ENCODE measurements at regions of chr6 and their contacts with region 1.

Region 1: DNA sequence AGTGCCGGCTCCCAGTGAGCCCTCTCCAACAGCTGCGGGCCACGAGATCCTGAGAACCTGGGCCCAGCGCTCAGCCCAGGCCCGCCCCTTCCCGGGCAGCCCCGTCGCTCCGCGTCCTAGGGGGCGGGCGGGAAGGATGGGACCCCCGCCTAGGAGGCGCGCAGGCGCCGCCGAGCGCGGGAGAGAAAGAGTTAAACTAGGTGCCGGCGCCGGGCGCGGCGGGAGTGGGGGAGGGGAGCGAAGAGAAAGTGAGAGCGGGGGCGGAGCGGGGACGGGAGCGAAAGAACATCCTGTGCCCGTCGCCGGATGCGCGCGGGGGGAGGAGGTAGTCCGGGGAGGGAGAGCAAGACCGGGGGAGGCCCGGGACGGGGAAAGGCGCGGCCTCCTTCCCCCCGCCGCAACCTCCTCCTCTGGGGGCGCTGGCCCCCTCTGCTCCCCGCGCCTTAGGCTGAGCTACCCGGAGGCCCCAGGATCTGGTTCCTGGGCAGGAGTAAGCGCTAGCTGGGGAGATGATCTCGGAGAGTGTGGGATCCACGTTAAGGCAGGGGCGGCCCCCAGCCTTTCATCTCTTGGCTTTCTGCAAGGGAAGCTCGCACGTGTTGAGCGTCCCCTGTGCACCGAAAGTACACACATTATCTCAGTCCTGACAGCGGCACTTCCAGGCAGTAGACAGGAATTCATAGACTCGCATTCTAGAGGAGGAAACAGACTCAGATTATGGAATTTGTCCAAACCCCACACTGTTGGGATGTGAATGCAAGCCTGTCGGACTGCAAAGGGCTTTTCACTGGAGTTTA is 4.9 kb upstream of the ARMC12 start:
- DNase-seq: peak; percentile 84 to 91 (median 90)
- H3K4me3 ChIP-seq: peak overlapping the region; percentile 61 to 81 (median 66)
- H3K27ac ChIP-seq: peak overlapping the region; percentile 72 to 83
- H3K4me1 ChIP-seq: peaks cover 29 to 85% (median 68%) of the 10 kb centered on the region in 4 experiments
- H3K27me3 ChIP-seq: no peaks in the 10 kb centered on the region

Region 2: DNA sequence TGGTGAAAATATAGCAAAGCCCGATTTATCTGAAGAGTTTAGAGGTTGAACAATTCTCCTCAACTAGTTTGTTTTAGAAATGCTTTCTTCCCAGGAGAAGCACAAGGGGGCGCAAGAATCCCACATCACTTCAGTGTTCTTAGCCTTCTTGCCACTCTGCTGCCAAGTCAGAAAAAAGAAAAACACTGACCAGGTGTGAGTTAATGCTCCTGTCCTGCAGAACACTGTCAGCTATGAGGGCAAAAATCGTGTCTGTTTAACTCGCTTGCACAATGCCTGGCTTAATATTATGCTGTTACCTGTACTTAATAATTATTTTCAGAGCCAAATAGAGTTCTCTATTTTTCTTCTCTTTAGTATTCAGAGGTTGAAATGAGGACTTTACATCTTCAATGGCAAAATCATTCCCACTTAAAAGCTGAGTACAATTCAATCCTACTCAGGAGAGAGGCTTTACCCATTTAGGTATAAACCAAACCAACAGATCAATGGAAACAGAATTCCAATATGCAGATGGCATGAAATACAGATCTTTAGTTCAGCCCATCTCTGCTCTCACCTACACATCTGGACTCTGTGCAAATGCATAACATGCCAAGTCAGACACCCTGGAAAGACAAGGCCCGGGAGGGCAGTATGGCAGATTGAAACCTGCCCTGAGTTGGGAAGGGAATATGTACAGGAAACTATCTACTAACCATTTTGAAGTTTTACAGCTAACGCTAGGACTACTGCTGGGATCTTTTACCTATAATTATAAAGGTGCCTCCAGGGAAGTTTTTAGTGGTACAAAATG is 147.8 kb before region 1 on chr6:
- CTCF ChIA-PET with region 1: interaction called, 102 read pairs
- POLR2A ChIA-PET with region 1: interaction called, 5 read pairs
- DNase-seq: peak; percentile 75 to 88 (median 84)
- H3K4me3 ChIP-seq: no peak overlapping the region
- H3K27ac ChIP-seq: no peak overlapping the region
- H3K4me1 ChIP-seq: peaks cover 0 to 3% (median 0%) of the 10 kb centered on the region in 4 experiments
- H3K27me3 ChIP-seq: no peaks in the 10 kb centered on the region

Region 3: GRCh38 chr6:35640017-35640664 is 91.8 kb before region 1 on chr6:
- CTCF ChIA-PET with region 1: interaction called, 65 read pairs
- POLR2A ChIA-PET with region 1: no interaction called
- DNase-seq: no peak
- H3K4me3 ChIP-seq: no peak overlapping the region
- H3K27ac ChIP-seq: no peak overlapping the region
- H3K4me1 ChIP-seq: no peaks in the 10 kb centered on the region
- H3K27me3 ChIP-seq: no peaks in the 10 kb centered on the region

Region 4: DNA sequence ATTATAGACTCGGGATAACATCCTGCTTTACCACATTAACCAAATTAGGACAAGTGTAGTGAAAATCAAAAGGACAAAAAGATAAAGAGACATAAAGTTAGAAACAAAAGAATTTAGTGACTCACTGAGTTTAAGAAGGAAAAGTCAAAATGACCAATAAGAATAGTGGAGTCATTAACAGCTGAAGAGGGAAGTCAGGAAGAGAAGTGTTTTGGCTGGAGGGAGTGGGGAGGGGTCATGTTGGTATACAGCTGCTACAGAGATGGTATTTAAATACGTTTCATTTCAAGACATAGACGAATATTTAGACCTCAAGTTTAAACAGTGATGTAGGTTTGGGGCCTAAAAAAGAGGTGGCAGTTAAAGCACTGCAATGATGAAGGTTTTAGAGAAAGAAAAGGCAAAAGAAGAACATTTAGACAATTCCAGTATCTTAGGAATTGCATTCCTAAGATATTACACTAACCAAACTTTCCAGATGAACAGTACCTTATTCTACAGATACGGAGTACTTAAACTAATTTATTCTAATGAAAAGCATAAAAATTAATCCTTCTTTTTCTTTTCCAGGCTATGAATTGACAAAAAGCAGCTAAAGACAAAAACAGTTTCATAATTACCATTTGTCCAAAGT is 53.8 kb before region 1 on chr6:
- CTCF ChIA-PET with region 1: interaction called, 73 read pairs
- POLR2A ChIA-PET with region 1: interaction called, 8 read pairs
- DNase-seq: no peak
- H3K4me3 ChIP-seq: no peak overlapping the region
- H3K27ac ChIP-seq: no peak overlapping the region
- H3K4me1 ChIP-seq: peaks cover 0 to 31% (median 10%) of the 10 kb centered on the region in 4 experiments
- H3K27me3 ChIP-seq: no peaks in the 10 kb centered on the region

Region 5: GRCh38 chr6:35719830-35720733 is 11.9 kb before region 1 on chr6:
- CTCF ChIA-PET with region 1: interaction called, 17 read pairs
- POLR2A ChIA-PET with region 1: interaction called, 4 read pairs
- DNase-seq: peak; percentile 40 to 83 (median 79)
- H3K4me3 ChIP-seq: peak overlapping the region in 5 of 7 experiments; percentile 26 to 64 (median 52)
- H3K27ac ChIP-seq: peak overlapping the region; percentile 46 to 80
- H3K4me1 ChIP-seq: peaks cover 17 to 90% (median 84%) of the 10 kb centered on the region in 4 experiments
- H3K27me3 ChIP-seq: no peaks in the 10 kb centered on the region

Region 6: DNA sequence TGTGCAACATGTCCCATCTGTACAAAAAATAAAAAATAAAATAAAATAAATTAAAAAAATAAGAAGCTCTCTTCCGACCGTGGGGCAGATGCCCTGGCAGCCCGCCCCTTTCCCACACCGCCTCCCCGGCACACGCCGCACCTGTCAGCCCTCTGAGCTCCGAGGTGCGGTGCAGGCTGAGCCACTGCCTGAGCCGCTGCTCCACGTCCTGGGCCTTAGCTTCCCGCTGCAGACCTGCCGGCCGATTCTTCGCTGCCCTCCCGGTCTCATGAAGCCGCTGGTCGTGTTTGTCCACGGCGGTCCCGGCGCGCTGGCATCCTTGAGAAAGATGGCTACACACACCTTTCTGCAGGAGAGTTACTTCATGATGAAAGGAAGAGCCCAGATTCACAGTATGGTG is 33.8 kb after region 1 on chr6:
- CTCF ChIA-PET with region 1: no interaction called
- POLR2A ChIA-PET with region 1: no interaction called
- DNase-seq: no peak
- H3K4me3 ChIP-seq: no peak overlapping the region
- H3K27ac ChIP-seq: no peak overlapping the region
- H3K4me1 ChIP-seq: peaks cover 0 to 7% (median 5%) of the 10 kb centered on the region in 4 experiments
- H3K27me3 ChIP-seq: peaks cover 5 to 36% (median 13%) of the 10 kb centered on the region in 5 experiments

Region 7: DNA sequence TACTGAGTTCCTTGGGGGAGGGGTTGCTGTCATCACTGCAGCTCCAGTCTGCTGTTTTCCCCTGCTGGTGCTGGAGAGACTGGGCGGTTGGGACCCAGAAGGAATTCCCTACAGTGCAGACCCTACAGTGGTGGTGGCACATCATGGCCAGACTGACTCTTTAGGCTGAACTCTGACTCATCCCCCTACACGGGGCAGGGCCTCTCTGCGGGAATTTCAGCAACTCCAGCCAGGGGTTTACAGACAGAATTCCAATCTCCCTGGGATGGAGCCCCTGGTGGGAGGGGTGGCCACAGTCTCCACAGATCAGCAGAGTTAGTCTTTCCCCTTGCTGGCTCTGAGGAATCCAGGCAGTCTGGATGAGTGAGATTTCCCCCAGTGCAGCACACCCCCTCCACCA is 351.5 kb after region 1 on chr6:
- CTCF ChIA-PET with region 1: no interaction called
- POLR2A ChIA-PET with region 1: no interaction called
- DNase-seq: no peak
- H3K4me3 ChIP-seq: no peak overlapping the region
- H3K27ac ChIP-seq: no peak overlapping the region
- H3K4me1 ChIP-seq: peaks cover 0 to 4% (median 0%) of the 10 kb centered on the region in 4 experiments
- H3K27me3 ChIP-seq: no peaks in the 10 kb centered on the region

Region 8: DNA sequence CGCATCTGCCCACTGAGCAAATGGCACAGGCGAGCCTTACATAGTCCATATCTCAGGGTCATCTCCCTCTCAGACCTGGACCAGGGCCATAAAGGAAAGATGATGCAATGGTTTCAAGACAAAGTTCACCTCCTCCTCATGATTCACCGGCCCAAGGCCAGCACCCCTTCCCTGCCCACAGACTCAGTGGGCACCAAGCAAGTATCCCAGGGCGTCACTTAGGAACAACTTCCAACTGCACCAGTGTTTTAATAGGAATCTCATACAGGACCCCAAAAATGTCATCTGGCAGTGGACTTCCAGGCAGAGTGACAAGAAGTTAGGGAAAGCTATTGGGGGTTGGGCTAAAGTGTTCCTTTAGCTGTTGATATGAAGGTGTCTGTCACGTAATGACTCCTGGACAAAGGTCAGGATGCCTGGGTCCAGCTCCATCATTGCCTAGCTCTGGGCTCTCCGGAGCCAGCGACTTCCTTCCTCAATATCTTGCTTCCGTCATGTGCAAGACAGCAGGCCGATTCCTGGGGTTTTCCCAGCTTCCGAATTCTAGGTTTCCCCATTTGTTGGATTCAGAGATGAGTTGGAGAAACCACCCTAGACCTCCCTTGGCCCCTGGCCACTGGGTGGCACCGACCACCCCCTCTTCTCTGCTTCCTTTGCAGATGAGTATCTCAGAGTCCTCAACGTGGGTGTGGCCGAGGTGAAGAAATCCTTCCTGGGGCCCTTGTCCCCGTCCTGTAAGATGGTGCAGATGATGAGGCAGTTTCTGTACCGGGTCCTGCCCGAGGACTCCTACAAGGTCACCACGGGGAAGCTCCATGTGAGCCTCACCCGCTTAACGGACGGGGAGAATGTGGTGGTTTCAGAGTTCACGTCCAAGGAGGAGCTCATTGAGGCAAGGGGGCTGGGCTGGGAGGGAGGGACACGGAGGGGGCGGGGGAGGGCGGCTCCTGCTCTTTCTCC is 559.0 kb after region 1 on chr6:
- CTCF ChIA-PET with region 1: no interaction called
- POLR2A ChIA-PET with region 1: no interaction called
- DNase-seq: peak in 2 of 3 donors; percentile 23 to 31
- H3K4me3 ChIP-seq: no peak overlapping the region
- H3K27ac ChIP-seq: no peak overlapping the region
- H3K4me1 ChIP-seq: peaks cover 0 to 10% (median 2%) of the 10 kb centered on the region in 4 experiments
- H3K27me3 ChIP-seq: peaks cover 0 to 12% (median 3%) of the 10 kb centered on the region in 5 experiments

Region 9: DNA sequence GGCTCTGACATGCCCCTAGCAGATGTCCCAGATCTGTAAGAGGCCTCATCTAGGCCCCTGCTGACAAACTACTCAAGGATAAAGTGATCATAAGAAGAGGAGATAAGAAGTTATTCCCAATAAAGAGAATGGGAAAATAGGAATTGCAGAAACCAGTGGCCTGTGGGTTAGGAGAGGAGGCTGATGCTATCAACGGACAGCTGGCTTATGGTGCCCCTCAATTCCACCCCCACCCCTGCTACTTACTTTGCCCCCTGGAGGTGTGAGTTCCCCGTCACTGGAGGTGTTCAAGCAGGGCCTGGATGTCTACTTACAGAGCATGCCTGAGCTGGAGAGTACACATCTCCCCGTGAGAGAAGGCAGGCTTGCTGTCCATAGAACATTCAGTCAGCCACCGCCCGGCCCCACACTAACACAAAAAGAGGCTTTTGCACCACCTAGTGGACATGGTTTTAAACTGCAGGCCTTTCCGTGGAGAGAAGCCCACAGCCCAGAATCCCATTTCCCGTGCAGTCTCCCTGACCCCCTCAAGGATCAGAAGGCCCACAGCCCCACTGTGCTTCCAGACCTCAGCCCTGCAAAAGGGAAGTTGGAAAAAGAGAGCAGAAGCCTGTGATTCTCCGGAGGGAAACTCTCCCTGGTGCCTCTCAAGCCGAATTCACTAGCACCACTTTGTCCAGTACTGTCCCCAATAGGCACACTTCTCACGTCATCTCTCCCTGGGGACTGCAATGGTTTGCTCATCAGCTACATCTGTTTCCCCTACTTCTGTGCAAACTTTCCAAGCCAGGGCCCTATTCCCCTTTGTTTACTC is 628.5 kb after region 1 on chr6:
- CTCF ChIA-PET with region 1: no interaction called
- POLR2A ChIA-PET with region 1: no interaction called
- DNase-seq: peak; percentile 67 to 79 (median 77)
- H3K4me3 ChIP-seq: no peak overlapping the region
- H3K27ac ChIP-seq: no peak overlapping the region
- H3K4me1 ChIP-seq: peaks cover 0 to 22% (median 13%) of the 10 kb centered on the region in 4 experiments
- H3K27me3 ChIP-seq: no peaks in the 10 kb centered on the region

Measured in common myeloid progenitor, CD34-positive (primary cell).